ENCODE measurements at regions of chr15 and their contacts with region 1.

Region 1: DNA sequence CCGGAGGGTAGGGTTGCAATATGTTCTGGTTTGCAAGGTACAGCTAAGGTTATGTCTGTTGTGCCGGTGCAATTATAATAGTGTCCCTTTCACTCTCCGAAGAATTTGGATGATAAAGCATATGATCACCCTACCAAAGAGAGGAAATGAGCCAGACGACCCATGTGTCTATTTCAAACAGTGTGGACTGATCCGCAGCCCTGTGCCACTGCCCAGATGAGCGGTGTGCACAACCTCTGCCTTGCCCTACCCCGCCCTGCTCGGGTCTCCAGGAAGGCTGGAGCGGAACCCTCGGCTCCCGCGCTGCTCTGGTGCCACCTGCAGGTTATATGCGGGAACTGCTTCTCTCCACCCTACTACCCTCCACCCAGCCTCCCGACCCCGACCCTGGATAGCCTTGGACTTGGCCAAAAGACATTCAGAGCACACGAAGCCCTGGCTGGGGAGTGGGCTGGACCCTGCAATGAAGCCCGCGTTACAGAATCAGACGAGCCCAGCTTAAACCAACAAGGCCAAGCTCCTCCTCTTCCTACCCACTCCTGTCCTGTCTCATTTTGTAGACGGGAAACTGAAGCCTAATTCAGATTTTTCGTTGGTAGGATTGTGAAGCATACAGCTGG is 68.4 kb upstream of the CHRNB4 start:
- DNase-seq: peak; percentile 67 to 82 (median 80)
- ATAC-seq: peak; percentile 100
- H3K4me3 ChIP-seq: no peak overlapping the region
- H3K27ac ChIP-seq: no peak overlapping the region
- H3K4me1 ChIP-seq: peaks cover 0 to 3% of the 10 kb centered on the region in 2 experiments; a peak in 2 of 5 replicates
- H3K27me3 ChIP-seq: no peaks in the 10 kb centered on the region; a peak in 2 of 5 replicates
- CTCF ChIP-seq: peak; percentile 85 to 90 (median 90)
- EP300 ChIP-seq: no peak
- POLR2A ChIP-seq: no peak
- RAD21 ChIP-seq: peak; percentile 85 to 89

Region 2: DNA sequence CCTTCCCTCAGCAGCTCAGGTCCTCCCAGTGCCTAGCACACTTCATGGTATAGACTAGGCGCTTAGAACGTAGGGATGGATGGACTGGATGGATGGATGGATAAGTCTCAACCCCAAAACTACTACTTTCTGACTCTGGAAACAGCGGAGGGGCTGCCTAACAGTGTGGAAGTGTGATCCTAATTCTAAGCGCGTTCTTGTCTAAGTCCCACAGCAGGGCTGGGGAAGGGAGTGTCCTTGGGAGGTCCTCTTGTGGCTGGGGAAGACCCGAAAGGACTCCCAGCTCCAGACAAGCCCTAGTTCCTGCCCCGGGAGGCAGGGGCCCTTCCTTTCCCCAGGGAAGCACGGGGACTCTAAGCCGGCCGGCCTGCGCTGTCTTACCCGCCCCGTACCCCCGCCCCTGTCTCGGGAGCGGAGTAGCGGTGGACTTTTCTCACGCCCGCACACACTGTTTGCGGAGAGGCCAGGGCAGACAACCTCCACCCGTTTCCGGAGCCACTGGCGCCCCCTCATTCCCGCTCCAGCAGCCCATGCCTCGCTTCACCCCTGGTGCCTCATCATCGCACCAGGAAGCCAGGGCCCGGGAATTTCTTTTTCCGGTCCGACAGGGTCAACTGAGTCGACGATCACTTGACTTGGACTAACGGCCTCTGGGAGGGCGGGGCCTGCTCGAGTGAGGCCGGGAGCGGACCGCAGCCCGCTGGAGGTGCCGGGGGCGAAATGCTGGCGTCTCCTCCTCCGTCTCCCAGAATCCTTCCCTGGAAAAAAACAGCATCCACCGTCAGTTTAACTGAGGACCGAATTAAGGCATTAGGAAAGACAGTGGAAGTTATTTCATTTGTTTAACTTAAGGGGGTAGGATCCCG is 765.1 kb before region 1 on chr15:
- CTCF ChIA-PET with region 1: no interaction called
- POLR2A ChIA-PET with region 1: no interaction called
- in situ Hi-C with region 1: no loop called
- intact Hi-C with region 1: no loop called
- DNase-seq: peak; percentile 36 to 85 (median 61)
- ATAC-seq: peak; percentile 87
- H3K4me3 ChIP-seq: peak overlapping the region; percentile 37
- H3K27ac ChIP-seq: peak overlapping the region; percentile 41; the same call in 2 of the 3 replicates
- H3K4me1 ChIP-seq: peaks cover 0 to 12% of the 10 kb centered on the region in 2 experiments; a peak in 3 of 5 replicates
- H3K27me3 ChIP-seq: no peaks in the 10 kb centered on the region; a peak in 1 of 5 replicates
- CTCF ChIP-seq: no peak
- EP300 ChIP-seq: no peak; the same call in 1 of the 2 replicates
- POLR2A ChIP-seq: peak; percentile 49; the same call in 1 of the 2 replicates
- RAD21 ChIP-seq: no peak

Region 3: DNA sequence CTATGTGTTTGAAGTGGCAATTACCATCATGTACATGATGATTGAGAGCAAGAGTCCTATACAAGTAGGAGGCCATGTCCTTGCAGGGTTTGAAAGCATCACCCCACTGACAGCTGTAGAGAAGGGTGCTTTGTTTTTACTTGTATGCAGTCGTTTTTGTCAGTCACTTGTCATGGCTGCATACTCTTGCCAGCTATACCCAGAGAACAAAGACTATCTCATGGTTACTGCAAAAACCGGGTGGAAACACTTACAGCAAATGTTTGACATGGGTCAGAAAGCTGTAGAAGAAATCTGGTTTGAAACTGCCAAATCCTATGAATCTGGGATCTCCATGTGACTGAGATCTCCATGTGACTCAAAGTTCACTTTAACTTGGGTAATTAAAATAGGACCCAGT is 176.0 kb before region 1 on chr15:
- CTCF ChIA-PET with region 1: no interaction called
- POLR2A ChIA-PET with region 1: no interaction called
- in situ Hi-C with region 1: no loop called
- intact Hi-C with region 1: no loop called
- DNase-seq: no peak
- ATAC-seq: no peak
- H3K4me3 ChIP-seq: no peak overlapping the region
- H3K27ac ChIP-seq: no peak overlapping the region
- H3K4me1 ChIP-seq: no peaks in the 10 kb centered on the region
- H3K27me3 ChIP-seq: no peaks in the 10 kb centered on the region
- CTCF ChIP-seq: no peak
- EP300 ChIP-seq: no peak
- POLR2A ChIP-seq: no peak
- RAD21 ChIP-seq: no peak

Region 4: DNA sequence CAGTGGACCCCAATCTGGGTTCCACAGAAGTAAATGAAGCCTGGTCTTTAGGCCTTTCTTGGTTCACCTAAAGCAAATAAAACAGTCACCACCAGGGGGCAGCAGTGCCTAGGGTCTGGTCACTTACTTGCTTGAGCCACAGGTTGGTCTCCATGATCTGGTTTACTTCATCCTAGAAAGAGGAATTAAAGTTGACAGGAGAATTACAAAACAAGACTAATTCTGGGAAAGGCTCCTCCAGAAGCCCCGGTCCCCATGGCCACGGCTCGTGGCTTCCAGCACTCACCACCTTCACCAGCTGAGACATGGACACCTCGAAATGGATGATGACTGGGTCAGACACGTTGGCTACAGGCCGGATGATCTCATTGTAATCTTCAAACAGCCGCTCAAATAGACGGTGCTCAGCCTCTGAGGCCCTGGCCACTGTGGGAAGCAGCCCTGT is 90.9 kb before region 1 on chr15:
- CTCF ChIA-PET with region 1: interaction called, 11 read pairs
- POLR2A ChIA-PET with region 1: no interaction called
- in situ Hi-C with region 1: loop called (anchors 5 kb)
- intact Hi-C with region 1: loop called (anchors 1 kb)
- DNase-seq: peak; percentile 82 to 86 (median 85)
- ATAC-seq: peak; percentile 93
- H3K4me3 ChIP-seq: no peak overlapping the region
- H3K27ac ChIP-seq: no peak overlapping the region
- H3K4me1 ChIP-seq: peaks cover 0 to 12% of the 10 kb centered on the region in 2 experiments; a peak in 1 of 5 replicates
- H3K27me3 ChIP-seq: peaks cover 21 to 35% of the 10 kb centered on the region in 2 experiments; a peak in 4 of 5 replicates
- CTCF ChIP-seq: peak; percentile 80 to 87 (median 84)
- EP300 ChIP-seq: no peak
- POLR2A ChIP-seq: no peak
- RAD21 ChIP-seq: peak; percentile 76 to 86

Region 5: DNA sequence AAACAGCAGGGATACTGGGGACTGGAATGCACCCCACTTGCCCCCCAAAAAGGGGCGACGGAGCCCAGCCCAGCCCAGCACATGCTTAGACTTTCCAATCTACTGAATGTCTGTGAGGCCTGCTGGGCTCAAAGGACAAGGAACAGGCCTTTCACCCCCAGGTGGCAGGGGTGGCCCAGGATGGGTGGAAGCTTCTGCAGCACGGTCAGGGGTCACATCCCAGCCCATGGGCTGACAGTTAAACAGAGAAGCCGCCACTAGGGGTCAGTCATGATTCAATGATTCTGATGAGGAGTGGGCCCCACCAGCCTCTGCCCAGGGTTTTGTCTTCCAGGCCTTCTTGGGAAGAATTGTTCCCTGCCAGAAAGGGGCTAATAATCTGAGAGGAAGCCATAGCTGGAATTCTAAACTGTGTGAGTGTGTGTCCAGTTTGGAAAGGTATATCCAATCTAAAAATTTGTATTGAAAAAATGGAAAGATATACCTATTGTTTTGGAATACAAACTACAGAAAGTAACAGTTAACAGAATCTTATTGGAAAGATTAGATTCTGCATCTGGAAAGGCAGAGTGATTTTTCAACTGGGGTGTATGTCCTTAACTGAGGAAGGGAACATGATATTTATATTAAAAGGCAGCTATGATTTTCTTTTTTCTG is 70.6 kb before region 1 on chr15:
- CTCF ChIA-PET with region 1: interaction called, 10 read pairs
- POLR2A ChIA-PET with region 1: no interaction called
- in situ Hi-C with region 1: no loop called
- intact Hi-C with region 1: loop called (anchors 1 kb)
- DNase-seq: peak; percentile 71 to 76 (median 73)
- ATAC-seq: peak; percentile 89
- H3K4me3 ChIP-seq: no peak overlapping the region
- H3K27ac ChIP-seq: no peak overlapping the region
- H3K4me1 ChIP-seq: peaks cover 3 to 12% of the 10 kb centered on the region in 2 experiments; a peak in 3 of 5 replicates
- H3K27me3 ChIP-seq: peaks cover 9 to 38% of the 10 kb centered on the region in 2 experiments; a peak in 4 of 5 replicates
- CTCF ChIP-seq: peak; percentile 69 to 78 (median 73)
- EP300 ChIP-seq: no peak
- POLR2A ChIP-seq: no peak
- RAD21 ChIP-seq: peak; percentile 47 to 72

Region 6: DNA sequence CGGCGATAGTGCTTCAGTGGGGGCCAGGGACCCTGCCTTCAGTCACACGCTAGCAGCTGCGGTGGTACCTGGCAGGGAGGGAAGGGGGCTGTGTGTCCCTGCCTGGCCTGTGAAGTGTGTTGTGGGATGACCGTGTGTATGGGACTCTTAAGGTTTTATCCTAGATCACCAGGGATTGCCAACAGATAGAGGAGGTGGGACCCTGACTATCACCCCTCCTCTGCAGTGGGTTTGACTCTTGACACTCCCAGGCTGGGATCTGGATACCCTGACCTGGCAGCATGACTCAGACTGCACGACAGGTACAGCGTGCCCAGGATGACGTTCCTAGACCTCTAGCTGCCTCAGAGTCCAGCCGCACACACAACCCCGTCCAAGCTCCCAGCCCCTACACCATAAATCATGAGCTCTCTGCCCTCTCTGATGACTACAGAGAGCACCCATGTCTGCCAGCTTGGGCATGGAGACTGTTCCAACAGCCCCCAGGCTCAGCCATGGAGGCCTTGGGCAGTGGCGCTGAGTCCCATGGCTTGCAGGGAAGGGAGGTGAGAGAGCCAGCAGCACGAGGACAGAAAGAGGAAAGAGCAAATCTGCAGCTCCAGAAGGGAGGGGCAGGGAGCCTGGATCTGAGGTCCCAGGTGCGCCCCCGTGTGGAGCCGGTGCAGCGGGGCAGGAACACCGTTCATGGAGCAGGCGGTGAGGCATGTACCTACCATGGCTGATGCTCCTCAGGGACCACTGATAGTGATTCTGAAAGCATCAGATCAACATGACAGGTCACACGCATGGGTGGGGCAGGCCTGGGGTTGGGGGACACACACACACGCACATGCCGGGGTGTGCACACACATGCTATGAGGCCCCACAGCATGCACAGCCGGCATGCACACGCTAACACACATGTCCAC is 30.9 kb after region 1 on chr15:
- CTCF ChIA-PET with region 1: no interaction called
- POLR2A ChIA-PET with region 1: no interaction called
- in situ Hi-C with region 1: no loop called
- intact Hi-C with region 1: no loop called
- DNase-seq: peak; percentile 41 to 87 (median 50)
- ATAC-seq: peak; percentile 96
- H3K4me3 ChIP-seq: no peak overlapping the region
- H3K27ac ChIP-seq: no peak overlapping the region
- H3K4me1 ChIP-seq: peaks cover 4 to 17% of the 10 kb centered on the region in 2 experiments; a peak in 4 of 5 replicates
- H3K27me3 ChIP-seq: peaks cover 0 to 9% of the 10 kb centered on the region in 2 experiments; a peak in 4 of 5 replicates
- CTCF ChIP-seq: peak; percentile 72 to 79 (median 78)
- EP300 ChIP-seq: no peak
- POLR2A ChIP-seq: no peak
- RAD21 ChIP-seq: peak in 1 of 2 experiments; percentile 33; a peak in 1 of 4 replicates

Region 7: GRCh38 chr15:78893538-78893937 is 184.2 kb after region 1 on chr15:
- CTCF ChIA-PET with region 1: no interaction called
- POLR2A ChIA-PET with region 1: no interaction called
- in situ Hi-C with region 1: no loop called
- intact Hi-C with region 1: no loop called
- DNase-seq: no peak
- ATAC-seq: no peak
- H3K4me3 ChIP-seq: no peak overlapping the region
- H3K27ac ChIP-seq: no peak overlapping the region
- H3K4me1 ChIP-seq: no peaks in the 10 kb centered on the region
- H3K27me3 ChIP-seq: no peaks in the 10 kb centered on the region
- CTCF ChIP-seq: no peak
- EP300 ChIP-seq: no peak
- POLR2A ChIP-seq: no peak
- RAD21 ChIP-seq: no peak